ENCODE measurements at regions of chr1 and their contacts with region 1.

Region 1: GRCh38 chr1:100132566-100133477 is at the starts of genes SASS6 and TRMT13:
- DNase-seq: peak; percentile 73 to 96 (median 94)
- ATAC-seq: peak; percentile 99
- H3K4me3 ChIP-seq: peak within 1 kb of the TSS; percentile 92
- H3K4me3 Mint-ChIP-seq: peak within 1 kb of the TSS; percentile 90 to 99 (median 98)
- H3K27ac ChIP-seq: peak within 1 kb of the TSS; percentile 74
- H3K27ac Mint-ChIP-seq: peak within 1 kb of the TSS; percentile 86 to 99 (median 96)
- H3K4me1 ChIP-seq: peaks cover 9 to 15% of the 10 kb centered on the region in 2 donors
- H3K4me1 Mint-ChIP-seq: peaks cover 7 to 53% (median 39%) of the 10 kb centered on the region in 7 donors
- H3K27me3 ChIP-seq: no peaks in the 10 kb centered on the region
- H3K27me3 Mint-ChIP-seq: no peaks in the 10 kb centered on the region
- total RNA-seq, gene SASS6: 2.5 to 11.6 (median 5.6) TPM
- total RNA-seq, gene TRMT13: 15.3 to 60.3 (median 23.9) TPM

Region 2: DNA sequence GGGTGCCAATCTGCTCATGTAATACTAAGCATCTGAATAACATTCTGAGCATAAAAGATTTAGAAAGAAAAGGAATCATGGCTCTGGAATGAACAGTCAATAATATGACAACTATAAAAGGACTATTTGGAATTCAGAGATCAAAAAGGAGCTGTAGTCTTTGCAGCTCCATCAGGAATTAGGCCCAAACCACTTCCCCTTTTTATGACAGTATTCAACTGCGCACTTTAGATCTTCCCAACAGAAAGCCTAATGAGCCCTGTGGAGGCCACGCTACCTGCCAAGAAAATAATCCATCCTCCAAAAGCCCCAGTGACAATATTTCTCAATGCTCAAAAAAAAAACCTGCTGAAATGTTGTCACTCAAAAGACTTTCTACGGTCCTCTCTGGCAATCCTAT is 1308.1 kb before region 1 on chr1:
- CTCF ChIA-PET with region 1: no interaction called
- POLR2A ChIA-PET with region 1: no interaction called
- intact Hi-C with region 1: no loop called
- DNase-seq: no peak
- ATAC-seq: no peak
- H3K4me3 ChIP-seq: no peak overlapping the region
- H3K4me3 Mint-ChIP-seq: no peak overlapping the region
- H3K27ac ChIP-seq: no peak overlapping the region
- H3K27ac Mint-ChIP-seq: no peak overlapping the region
- H3K4me1 ChIP-seq: no peaks in the 10 kb centered on the region
- H3K4me1 Mint-ChIP-seq: peaks cover 0 to 5% (median 0%) of the 10 kb centered on the region in 7 donors
- H3K27me3 ChIP-seq: no peaks in the 10 kb centered on the region
- H3K27me3 Mint-ChIP-seq: no peaks in the 10 kb centered on the region

Region 3: GRCh38 chr1:99849744-99850458 is 282.9 kb before region 1 on chr1 and contains the start of gene AGL:
- CTCF ChIA-PET with region 1: no interaction called
- POLR2A ChIA-PET with region 1: no interaction called
- intact Hi-C with region 1: loop called (anchors 1 kb)
- DNase-seq: peak; percentile 76 to 88 (median 86)
- ATAC-seq: peak; percentile 97
- H3K4me3 ChIP-seq: peak within 1 kb of the TSS; percentile 81
- H3K4me3 Mint-ChIP-seq: peak within 1 kb of the TSS; percentile 89 to 99 (median 96)
- H3K27ac ChIP-seq: peak within 1 kb of the TSS; percentile 75
- H3K27ac Mint-ChIP-seq: peak within 1 kb of the TSS; percentile 86 to 98 (median 96)
- H3K4me1 ChIP-seq: peaks cover 7 to 10% of the 10 kb centered on the region in 2 donors
- H3K4me1 Mint-ChIP-seq: peaks cover 20 to 42% (median 37%) of the 10 kb centered on the region in 7 donors
- H3K27me3 ChIP-seq: no peaks in the 10 kb centered on the region
- H3K27me3 Mint-ChIP-seq: no peaks in the 10 kb centered on the region
- total RNA-seq, gene AGL: 11.5 to 20.1 (median 12.5) TPM

Region 4: GRCh38 chr1:100107696-100108095 is 25.1 kb before region 1 on chr1:
- CTCF ChIA-PET with region 1: no interaction called
- POLR2A ChIA-PET with region 1: no interaction called
- intact Hi-C with region 1: no loop called
- DNase-seq: no peak
- ATAC-seq: no peak
- H3K4me3 ChIP-seq: no peak overlapping the region
- H3K4me3 Mint-ChIP-seq: no peak overlapping the region
- H3K27ac ChIP-seq: no peak overlapping the region
- H3K27ac Mint-ChIP-seq: no peak overlapping the region
- H3K4me1 ChIP-seq: no peaks in the 10 kb centered on the region
- H3K4me1 Mint-ChIP-seq: peaks cover 0 to 8% (median 4%) of the 10 kb centered on the region in 7 donors
- H3K27me3 ChIP-seq: no peaks in the 10 kb centered on the region
- H3K27me3 Mint-ChIP-seq: no peaks in the 10 kb centered on the region

Region 5: DNA sequence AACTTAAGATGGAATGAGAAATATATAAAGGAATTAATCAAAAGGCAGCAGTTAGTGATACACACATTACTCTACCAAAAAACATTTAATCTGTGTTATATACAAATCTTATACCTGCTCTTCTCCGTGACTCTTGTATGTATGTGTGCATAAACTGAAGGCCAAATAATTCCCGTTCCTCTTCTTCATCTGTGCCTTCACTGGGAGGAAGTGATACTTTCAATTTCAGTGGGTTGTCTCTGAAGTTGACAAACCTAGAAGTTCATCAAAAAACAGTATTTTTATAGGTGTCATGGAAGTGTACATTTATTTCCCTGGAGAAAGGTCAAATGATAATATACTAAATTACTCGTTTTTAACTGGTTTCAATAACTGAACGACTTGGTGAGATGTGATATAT is 19.4 kb after region 1 on chr1:
- CTCF ChIA-PET with region 1: no interaction called
- POLR2A ChIA-PET with region 1: no interaction called
- intact Hi-C with region 1: no loop called
- DNase-seq: no peak
- ATAC-seq: no peak
- H3K4me3 ChIP-seq: no peak overlapping the region
- H3K4me3 Mint-ChIP-seq: no peak overlapping the region
- H3K27ac ChIP-seq: no peak overlapping the region
- H3K27ac Mint-ChIP-seq: peak overlapping the region in 7 of 9 donors; percentile 10 to 63 (median 36)
- H3K4me1 ChIP-seq: no peaks in the 10 kb centered on the region
- H3K4me1 Mint-ChIP-seq: peaks cover 4 to 14% (median 7%) of the 10 kb centered on the region in 7 donors
- H3K27me3 ChIP-seq: no peaks in the 10 kb centered on the region
- H3K27me3 Mint-ChIP-seq: no peaks in the 10 kb centered on the region

Region 6: DNA sequence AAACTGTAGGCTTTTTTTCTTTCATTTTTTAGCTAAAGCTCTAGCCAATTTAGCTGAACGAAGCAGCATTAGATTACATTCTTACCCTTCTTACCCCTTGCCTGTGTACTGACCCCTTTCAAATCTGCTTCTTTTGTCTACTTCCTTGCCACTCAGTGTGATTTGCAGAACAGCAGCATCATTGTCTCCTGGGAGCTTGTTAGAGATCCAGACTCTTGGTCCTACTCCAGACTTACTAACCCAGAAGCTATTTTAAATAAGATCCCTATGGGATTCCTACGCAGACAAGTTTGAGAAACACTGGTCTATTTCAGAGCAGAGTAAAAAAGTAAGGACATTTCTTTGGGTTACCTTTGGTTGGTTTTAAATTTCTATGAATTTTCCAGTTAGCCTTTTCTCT is 31.4 kb after region 1 on chr1:
- CTCF ChIA-PET with region 1: no interaction called
- POLR2A ChIA-PET with region 1: no interaction called
- intact Hi-C with region 1: no loop called
- DNase-seq: no peak
- ATAC-seq: no peak
- H3K4me3 ChIP-seq: no peak overlapping the region
- H3K4me3 Mint-ChIP-seq: no peak overlapping the region
- H3K27ac ChIP-seq: no peak overlapping the region
- H3K27ac Mint-ChIP-seq: no peak overlapping the region
- H3K4me1 ChIP-seq: no peaks in the 10 kb centered on the region
- H3K4me1 Mint-ChIP-seq: no peaks in the 10 kb centered on the region
- H3K27me3 ChIP-seq: no peaks in the 10 kb centered on the region
- H3K27me3 Mint-ChIP-seq: no peaks in the 10 kb centered on the region

Region 7: DNA sequence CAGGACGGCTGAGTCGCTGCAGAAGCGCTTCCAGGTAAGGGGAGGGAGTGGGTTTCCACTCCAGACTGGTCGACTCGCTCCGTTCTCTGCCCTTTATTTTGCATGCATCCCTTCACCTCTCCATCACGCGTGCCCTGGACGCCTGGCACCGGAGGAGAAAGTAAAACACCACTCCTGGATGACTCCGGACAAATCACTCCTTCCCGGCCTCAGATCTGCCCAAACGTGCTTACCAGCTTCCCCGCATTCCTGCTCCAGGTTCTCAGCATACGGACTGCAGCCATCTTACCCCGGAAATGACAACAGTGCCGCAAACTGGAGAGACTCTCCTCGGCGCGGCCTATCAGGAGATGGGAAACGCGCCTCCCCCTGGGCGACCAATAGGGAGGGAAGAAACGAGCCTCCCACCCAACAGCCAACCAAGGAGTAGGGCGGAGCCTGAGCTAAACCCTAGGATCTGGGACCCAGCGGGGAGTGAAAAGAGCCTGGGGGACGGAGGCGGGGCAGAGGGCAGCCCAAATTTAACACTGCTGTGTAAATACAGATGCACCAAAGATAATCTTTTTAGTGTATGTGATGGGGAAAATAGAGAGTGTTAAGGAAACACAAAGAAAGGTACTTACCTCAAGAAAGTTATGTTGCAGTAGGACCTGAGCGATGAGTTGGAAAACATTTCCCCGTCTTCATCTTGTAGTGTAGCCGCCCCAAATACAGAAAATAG is 116.9 kb after region 1 on chr1 and contains the start of gene DBT:
- CTCF ChIA-PET with region 1: no interaction called
- POLR2A ChIA-PET with region 1: interaction called, 3 read pairs
- intact Hi-C with region 1: loop called (anchors 1 kb)
- DNase-seq: peak; percentile 64 to 93 (median 88)
- ATAC-seq: peak; percentile 100
- H3K4me3 ChIP-seq: peak within 1 kb of the TSS; percentile 82
- H3K4me3 Mint-ChIP-seq: peak within 1 kb of the TSS in 1 of 10 donors; percentile 30
- H3K27ac ChIP-seq: peak within 1 kb of the TSS; percentile 79
- H3K27ac Mint-ChIP-seq: peak within 1 kb of the TSS in 2 of 9 donors; percentile 22 to 26
- H3K4me1 ChIP-seq: peaks cover 7 to 23% of the 10 kb centered on the region in 2 donors
- H3K4me1 Mint-ChIP-seq: peaks cover 9 to 24% (median 19%) of the 10 kb centered on the region in 7 donors
- H3K27me3 ChIP-seq: no peaks in the 10 kb centered on the region
- H3K27me3 Mint-ChIP-seq: peaks cover 0 to 8% (median 0%) of the 10 kb centered on the region in 5 donors
- total RNA-seq, gene DBT: 9.2 to 18.4 (median 9.7) TPM

Region 8: GRCh38 chr1:100443811-100444571 is 311.2 kb after region 1 on chr1:
- CTCF ChIA-PET with region 1: no interaction called
- POLR2A ChIA-PET with region 1: no interaction called
- intact Hi-C with region 1: loop called in 1 of 2 experiments (anchors 2 kb)
- DNase-seq: peak in 5 of 9 donors; percentile 31 to 42 (median 36)
- ATAC-seq: peak; percentile 6
- H3K4me3 ChIP-seq: peak overlapping the region; percentile 12
- H3K4me3 Mint-ChIP-seq: peak overlapping the region; percentile 66 to 86 (median 81)
- H3K27ac ChIP-seq: peak overlapping the region; percentile 93
- H3K27ac Mint-ChIP-seq: peak overlapping the region; percentile 92 to 99 (median 98)
- H3K4me1 ChIP-seq: peaks cover 83 to 84% of the 10 kb centered on the region in 2 donors
- H3K4me1 Mint-ChIP-seq: peaks cover 53 to 95% (median 87%) of the 10 kb centered on the region in 7 donors
- H3K27me3 ChIP-seq: no peaks in the 10 kb centered on the region
- H3K27me3 Mint-ChIP-seq: no peaks in the 10 kb centered on the region

Region 9: DNA sequence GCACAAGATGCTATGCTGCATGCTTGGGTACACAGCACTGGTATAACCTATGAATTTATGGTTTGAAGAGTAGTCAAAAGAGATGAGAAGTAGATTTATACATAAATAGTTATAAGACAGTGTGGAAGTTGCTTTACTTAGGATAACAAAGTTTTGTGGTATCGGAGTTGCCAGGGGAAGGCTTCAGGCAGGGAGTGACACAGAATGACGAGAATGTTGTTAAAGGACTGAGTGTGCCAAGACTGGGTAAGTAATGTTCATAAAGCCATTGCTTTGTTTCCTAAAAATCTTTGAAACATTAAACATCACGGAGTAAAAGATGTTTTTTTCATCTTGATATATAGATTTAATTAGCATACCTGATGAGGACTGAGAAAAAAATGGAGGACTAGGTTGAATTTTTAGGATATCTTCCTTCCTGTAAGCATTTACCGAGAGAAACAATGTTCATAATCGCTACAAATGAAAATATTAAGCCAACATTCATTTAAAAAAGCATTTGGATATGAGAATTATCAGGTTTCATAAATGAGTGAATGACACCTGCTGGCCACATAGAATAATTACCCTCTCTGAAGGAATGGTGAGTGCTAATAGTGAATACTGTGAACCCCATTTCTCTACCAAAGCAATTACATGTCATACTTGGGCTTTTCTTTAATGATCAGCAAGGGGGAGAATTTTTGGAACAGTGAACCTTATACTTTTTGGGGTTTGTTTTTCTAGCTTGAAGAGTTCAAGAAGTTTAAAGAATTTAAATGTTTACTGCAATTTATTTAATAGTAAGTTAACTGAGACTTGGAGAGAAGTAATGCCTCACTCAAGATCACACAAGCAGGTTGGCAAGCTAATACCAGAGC is 733.4 kb after region 1 on chr1:
- CTCF ChIA-PET with region 1: interaction called, 3 read pairs
- POLR2A ChIA-PET with region 1: no interaction called
- intact Hi-C with region 1: loop called in 1 of 2 experiments (anchors 10 kb)
- DNase-seq: peak in 4 of 9 donors; percentile 6 to 21 (median 14)
- ATAC-seq: peak; percentile 51
- H3K4me3 ChIP-seq: no peak overlapping the region
- H3K4me3 Mint-ChIP-seq: no peak overlapping the region
- H3K27ac ChIP-seq: no peak overlapping the region
- H3K27ac Mint-ChIP-seq: no peak overlapping the region
- H3K4me1 ChIP-seq: no peaks in the 10 kb centered on the region
- H3K4me1 Mint-ChIP-seq: peaks cover 0 to 2% (median 0%) of the 10 kb centered on the region in 7 donors
- H3K27me3 ChIP-seq: no peaks in the 10 kb centered on the region
- H3K27me3 Mint-ChIP-seq: no peaks in the 10 kb centered on the region